ENCODE measurements at regions of chr15 and their contacts with region 1.

Region 1: GRCh38 chr15:70936326-70936725 is 43.7 kb downstream of the LRRC49 start:
- DNase-seq: no peak
- H3K4me3 ChIP-seq: no peak overlapping the region
- H3K27ac ChIP-seq: no peak overlapping the region
- H3K4me1 ChIP-seq: no peaks in the 10 kb centered on the region
- H3K27me3 ChIP-seq: no peaks in the 10 kb centered on the region
- CTCF ChIP-seq: no peak
- EP300 ChIP-seq: no peak
- POLR2A ChIP-seq: no peak

Region 2: DNA sequence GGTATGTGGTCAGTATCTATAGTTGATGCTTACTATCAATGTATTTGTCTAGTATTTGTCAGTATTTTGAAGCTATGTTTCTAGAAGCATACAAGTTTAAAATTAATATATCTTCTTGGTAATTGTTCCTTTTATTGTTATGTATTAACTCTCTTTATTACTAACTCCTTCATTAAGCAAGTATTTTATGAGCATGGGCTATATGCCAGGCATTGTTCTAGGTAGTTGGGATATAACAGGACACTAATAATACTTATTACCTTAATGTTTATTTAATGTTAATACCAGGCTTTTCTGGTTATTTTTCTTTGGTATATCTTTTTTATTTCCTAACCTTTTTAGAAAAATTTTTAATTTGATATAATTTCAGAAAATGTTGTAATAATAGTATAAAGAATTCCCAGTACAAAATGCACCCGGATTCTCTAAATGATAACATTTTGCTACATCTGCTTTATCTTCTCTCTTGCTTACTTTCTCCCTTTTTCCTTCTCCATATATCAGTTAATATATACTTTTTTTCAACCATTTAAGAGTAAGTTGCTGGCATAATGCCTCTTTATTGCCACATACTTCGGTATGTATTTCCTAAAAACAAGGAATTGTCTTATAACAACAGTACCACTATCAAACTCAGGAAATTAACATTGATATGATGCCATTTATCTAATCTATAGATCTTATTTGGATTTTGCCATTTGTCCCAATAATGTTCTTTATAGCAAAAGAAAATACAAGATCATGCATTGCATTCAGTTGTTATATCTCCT is 12.8 kb before region 1 on chr15:
- intact Hi-C with region 1: loop called in 1 of 4 experiments (anchors 2 kb)
- DNase-seq: no peak
- H3K4me3 ChIP-seq: no peak overlapping the region
- H3K27ac ChIP-seq: no peak overlapping the region
- H3K4me1 ChIP-seq: no peaks in the 10 kb centered on the region
- H3K27me3 ChIP-seq: no peaks in the 10 kb centered on the region
- CTCF ChIP-seq: no peak
- EP300 ChIP-seq: no peak
- POLR2A ChIP-seq: no peak